ENCODE measurements at regions of chr6 and their contacts with region 1.

Region 1: GRCh38 chr6:152206072-152206818 is 398.8 kb downstream of the ESR1 start:
- DNase-seq: peak; percentile 36
- H3K4me3 ChIP-seq: no peak overlapping the region
- H3K27ac ChIP-seq: no peak overlapping the region
- H3K4me1 ChIP-seq: no peaks in the 10 kb centered on the region
- H3K27me3 ChIP-seq: no peaks in the 10 kb centered on the region
- CTCF ChIP-seq: peak; percentile 37

Region 2: DNA sequence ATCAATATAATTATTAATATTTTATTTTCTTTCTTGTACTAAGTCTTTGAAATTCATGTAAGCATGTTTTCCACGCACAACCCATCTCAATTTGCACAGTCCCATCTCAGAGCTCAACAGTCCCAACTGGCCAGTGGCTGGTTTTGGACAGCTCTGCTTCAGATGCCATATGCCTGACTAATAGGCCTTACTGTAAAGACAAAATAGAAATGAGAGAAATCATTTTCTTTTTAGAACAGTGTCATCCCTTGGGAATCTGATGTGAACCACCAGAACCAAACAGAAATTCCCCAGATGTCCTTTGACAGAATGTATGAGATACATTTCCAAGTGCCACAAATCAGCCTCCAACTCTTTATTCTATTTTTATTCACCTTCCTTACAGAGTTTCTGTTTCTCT is 59.9 kb before region 1 on chr6:
- intact Hi-C with region 1: no loop called
- DNase-seq: no peak
- H3K4me3 ChIP-seq: no peak overlapping the region
- H3K27ac ChIP-seq: no peak overlapping the region
- H3K4me1 ChIP-seq: no peaks in the 10 kb centered on the region
- H3K27me3 ChIP-seq: no peaks in the 10 kb centered on the region
- CTCF ChIP-seq: no peak

Region 3: GRCh38 chr6:152261179-152261578 is 54.9 kb after region 1 on chr6:
- intact Hi-C with region 1: loop called (anchors 5 kb)
- DNase-seq: no peak
- H3K4me3 ChIP-seq: no peak overlapping the region
- H3K27ac ChIP-seq: no peak overlapping the region
- H3K4me1 ChIP-seq: no peaks in the 10 kb centered on the region
- H3K27me3 ChIP-seq: no peaks in the 10 kb centered on the region
- CTCF ChIP-seq: no peak

Region 4: DNA sequence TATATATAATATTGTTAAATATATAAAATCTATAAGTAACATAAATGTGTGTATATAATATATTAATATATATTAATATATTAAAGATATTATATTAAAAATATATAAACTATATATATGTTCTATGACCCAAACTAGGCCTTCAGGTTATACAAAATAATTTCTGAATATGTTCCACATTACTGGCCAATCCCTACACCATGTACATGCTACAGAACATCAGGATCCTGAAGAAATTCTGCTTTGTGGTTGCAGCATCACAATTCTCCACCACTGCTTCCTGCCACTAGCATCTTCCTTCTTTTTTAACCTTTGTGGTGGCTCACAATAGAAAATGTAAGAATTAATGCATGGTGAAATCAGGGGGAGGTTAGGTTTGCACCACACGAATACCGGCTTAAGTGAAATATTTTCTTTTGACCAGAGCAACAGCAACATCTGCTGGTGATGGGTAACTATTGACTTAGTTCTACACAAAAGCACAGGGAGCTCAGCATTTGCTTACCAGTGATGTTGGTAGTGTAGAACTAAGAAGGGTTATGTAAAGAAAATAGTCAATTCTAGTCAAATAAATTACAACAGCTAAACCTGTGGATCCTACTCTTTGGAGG is 150.3 kb after region 1 on chr6:
- intact Hi-C with region 1: loop called (anchors 10 kb)
- DNase-seq: no peak
- H3K4me3 ChIP-seq: no peak overlapping the region
- H3K27ac ChIP-seq: no peak overlapping the region
- H3K4me1 ChIP-seq: no peaks in the 10 kb centered on the region
- H3K27me3 ChIP-seq: no peaks in the 10 kb centered on the region
- CTCF ChIP-seq: no peak